PC-3 (cell line): ENCODE measurements at regions of chr2 and their contacts with region 1.

Region 1: GRCh38 chr2:199366406-199366805 is 91.3 kb downstream of the SATB2 start:
- DNase-seq: peak; percentile 78
- ATAC-seq: peak; percentile 82
- H3K4me3 ChIP-seq: no peak overlapping the region
- H3K27ac ChIP-seq: peak overlapping the region; percentile 24
- H3K4me1 ChIP-seq: peaks cover 44% of the 10 kb centered on the region
- H3K27me3 ChIP-seq: no peaks in the 10 kb centered on the region
- CTCF ChIP-seq: no peak

Region 2: GRCh38 chr2:199339891-199340605 is 26.4 kb before region 1 on chr2:
- CTCF ChIA-PET with region 1: no interaction called
- POLR2A ChIA-PET with region 1: no interaction called
- intact Hi-C with region 1: loop called (anchors 1 kb)
- DNase-seq: peak; percentile 72
- ATAC-seq: peak; percentile 93
- H3K4me3 ChIP-seq: no peak overlapping the region
- H3K27ac ChIP-seq: peak overlapping the region; percentile 66
- H3K4me1 ChIP-seq: peaks cover 17% of the 10 kb centered on the region
- H3K27me3 ChIP-seq: no peaks in the 10 kb centered on the region
- CTCF ChIP-seq: no peak

Region 3: GRCh38 chr2:199459286-199460016 is 93.0 kb after region 1 on chr2:
- CTCF ChIA-PET with region 1: no interaction called
- POLR2A ChIA-PET with region 1: no interaction called
- intact Hi-C with region 1: loop called (anchors 1 kb)
- DNase-seq: peak; percentile 88
- ATAC-seq: peak; percentile 43
- H3K4me3 ChIP-seq: peak overlapping the region; percentile 79
- H3K27ac ChIP-seq: peak overlapping the region; percentile 75
- H3K4me1 ChIP-seq: peaks cover 14% of the 10 kb centered on the region
- H3K27me3 ChIP-seq: no peaks in the 10 kb centered on the region
- CTCF ChIP-seq: no peak

Region 4: DNA sequence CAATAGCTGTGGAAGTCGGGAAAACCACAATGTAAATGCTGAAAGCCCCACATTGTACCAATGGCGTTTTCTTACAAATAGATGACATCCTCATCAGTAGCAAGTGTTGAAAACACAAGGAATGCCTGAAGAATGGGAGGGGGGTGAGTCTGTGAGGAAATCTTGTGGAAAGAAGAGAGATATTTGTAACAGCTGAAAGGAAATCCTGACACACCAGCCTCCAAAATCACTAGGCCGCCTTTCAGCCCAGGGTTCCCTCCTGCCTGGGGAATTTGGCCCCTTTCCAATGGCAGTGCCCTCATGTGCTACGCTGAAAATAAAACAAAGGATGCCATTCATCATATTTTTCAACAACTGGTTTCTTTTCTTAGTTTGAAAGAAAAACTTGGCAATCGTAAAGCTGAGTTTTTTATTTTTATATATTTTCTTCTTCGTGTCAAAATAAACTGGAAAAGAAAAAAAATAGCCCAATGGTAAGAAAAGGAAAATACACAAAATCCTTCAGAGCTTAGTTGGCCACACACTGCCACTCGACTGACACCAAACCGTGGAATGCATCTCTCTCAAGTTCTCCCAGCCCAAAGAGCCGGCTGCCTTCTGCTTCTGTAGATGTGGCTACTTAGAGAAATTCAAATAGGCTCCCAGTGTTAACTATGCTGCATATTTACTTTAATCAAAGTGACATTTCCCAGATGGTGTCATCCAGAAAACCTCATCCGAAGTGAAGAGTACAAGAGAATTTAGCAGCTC is 432.6 kb after region 1 on chr2:
- CTCF ChIA-PET with region 1: no interaction called
- POLR2A ChIA-PET with region 1: no interaction called
- intact Hi-C with region 1: no loop called
- DNase-seq: no peak
- ATAC-seq: no peak
- H3K4me3 ChIP-seq: no peak overlapping the region
- H3K27ac ChIP-seq: no peak overlapping the region
- H3K4me1 ChIP-seq: no peaks in the 10 kb centered on the region
- H3K27me3 ChIP-seq: peaks cover 49% of the 10 kb centered on the region
- CTCF ChIP-seq: no peak